Activated CD4-positive, alpha-beta memory T cell treated with anti-CD3 and anti-CD28 coated beads for 36 hours (primary cell): ENCODE measurements at regions of chr6 and their contacts with region 1.

Region 1: GRCh38 chr6:52664186-52664990 is 6.5 kb upstream of the TMEM14A start:
- DNase-seq: peak; percentile 84
- H3K4me3 Mint-ChIP-seq: no peak overlapping the region
- H3K27ac Mint-ChIP-seq: no peak overlapping the region
- H3K4me1 Mint-ChIP-seq: peaks cover 8% of the 10 kb centered on the region
- H3K27me3 Mint-ChIP-seq: no peaks in the 10 kb centered on the region

Region 2: DNA sequence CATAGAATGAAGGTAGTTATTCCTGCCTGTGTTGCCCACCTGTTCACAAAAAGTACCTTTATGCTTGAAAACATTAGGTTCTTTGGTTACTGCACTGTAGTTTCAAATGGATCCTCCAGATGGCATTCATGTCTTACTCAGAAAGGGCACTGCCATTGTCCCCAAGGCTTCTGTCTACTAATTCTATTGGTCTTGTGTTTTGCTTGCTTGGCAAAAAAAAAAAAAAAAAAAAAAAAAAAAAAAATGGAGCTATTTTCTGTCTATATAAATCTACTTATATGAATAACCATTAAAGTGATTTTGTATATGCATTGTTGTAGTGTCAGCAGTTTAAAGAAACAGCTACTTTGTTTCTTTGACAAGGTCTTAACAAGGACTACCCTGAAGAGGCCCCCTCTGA is 256.9 kb before region 1 on chr6:
- CTCF ChIA-PET with region 1: interaction called, 19 read pairs
- POLR2A ChIA-PET with region 1: no interaction called
- intact Hi-C with region 1: no loop called
- DNase-seq: no peak
- H3K4me3 Mint-ChIP-seq: no peak overlapping the region
- H3K27ac Mint-ChIP-seq: no peak overlapping the region
- H3K4me1 Mint-ChIP-seq: peaks cover 14% of the 10 kb centered on the region
- H3K27me3 Mint-ChIP-seq: no peaks in the 10 kb centered on the region

Region 3: GRCh38 chr6:52577022-52577777 is 87.2 kb before region 1 on chr6 and contains the start of gene TRAM2:
- CTCF ChIA-PET with region 1: interaction called, 15 read pairs
- POLR2A ChIA-PET with region 1: interaction called, 3 read pairs
- intact Hi-C with region 1: loop called (anchors 1 kb)
- DNase-seq: peak; percentile 70
- H3K4me3 Mint-ChIP-seq: peak within 1 kb of the TSS; percentile 77
- H3K27ac Mint-ChIP-seq: peak within 1 kb of the TSS; percentile 59
- H3K4me1 Mint-ChIP-seq: peaks cover 29% of the 10 kb centered on the region
- H3K27me3 Mint-ChIP-seq: no peaks in the 10 kb centered on the region
- total RNA-seq, gene TRAM2: 2.4 to 2.6 TPM

Region 4: DNA sequence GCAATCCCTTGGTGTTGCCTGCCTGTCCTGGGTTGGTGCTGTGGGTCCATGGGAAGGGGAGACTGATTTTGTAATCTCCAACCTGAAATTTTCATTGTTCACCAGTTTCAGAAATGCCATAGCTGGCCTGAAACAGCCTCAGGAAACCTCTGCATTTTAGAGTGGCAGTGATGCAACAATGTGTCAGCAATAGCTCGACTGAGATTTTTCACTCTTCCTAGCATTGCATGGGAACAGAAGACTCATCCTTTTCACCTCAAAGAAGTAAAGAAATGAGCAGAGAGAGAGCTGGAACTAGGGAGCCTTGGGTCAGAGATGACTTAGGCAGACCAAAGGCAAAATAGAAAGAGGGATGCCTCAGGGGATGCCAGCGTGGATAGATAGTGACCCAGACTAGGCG is 17.2 kb before region 1 on chr6:
- CTCF ChIA-PET with region 1: interaction called, 73 read pairs
- POLR2A ChIA-PET with region 1: no interaction called
- intact Hi-C with region 1: loop called (anchors 1 kb)
- DNase-seq: peak; percentile 21
- H3K4me3 Mint-ChIP-seq: no peak overlapping the region
- H3K27ac Mint-ChIP-seq: no peak overlapping the region
- H3K4me1 Mint-ChIP-seq: peaks cover 8% of the 10 kb centered on the region
- H3K27me3 Mint-ChIP-seq: peaks cover 13% of the 10 kb centered on the region

Region 5: DNA sequence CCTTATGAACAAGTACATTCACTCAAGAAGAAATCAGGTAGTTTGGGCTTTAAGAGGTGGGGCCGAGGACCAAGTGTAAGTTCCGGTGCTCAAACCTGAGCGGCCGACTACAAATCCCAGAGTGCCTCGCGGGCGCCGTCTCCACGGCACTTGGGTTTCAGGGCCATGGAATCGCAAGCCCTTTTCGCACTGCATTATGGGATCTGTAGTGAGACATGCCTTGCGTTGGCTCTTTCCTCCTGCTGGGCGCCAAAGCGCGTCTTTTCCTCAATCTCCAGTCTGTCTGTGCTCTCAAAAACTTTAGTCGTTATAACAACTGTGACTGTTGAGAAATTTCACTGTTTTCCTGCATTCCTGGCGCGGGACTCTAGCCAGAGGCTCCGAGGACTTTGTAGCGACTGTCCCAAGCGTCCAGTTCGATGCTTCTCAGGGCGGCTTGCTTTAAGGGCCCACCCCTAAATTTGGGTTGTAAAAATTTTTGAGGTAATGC is 400.4 kb after region 1 on chr6:
- CTCF ChIA-PET with region 1: no interaction called
- POLR2A ChIA-PET with region 1: no interaction called
- intact Hi-C with region 1: loop called (anchors 2 kb)
- DNase-seq: peak; percentile 98
- H3K4me3 Mint-ChIP-seq: peak overlapping the region; percentile 100
- H3K27ac Mint-ChIP-seq: peak overlapping the region; percentile 97
- H3K4me1 Mint-ChIP-seq: peaks cover 52% of the 10 kb centered on the region
- H3K27me3 Mint-ChIP-seq: no peaks in the 10 kb centered on the region